Posterior vena cava (tissue), 2 donors: ENCODE measurements at regions of chr9 and their contacts with region 1.

Region 1: GRCh38 chr9:136451221-136451877 is 11.7 kb upstream of the INPP5E start:
- DNase-seq: no peak

Region 2: DNA sequence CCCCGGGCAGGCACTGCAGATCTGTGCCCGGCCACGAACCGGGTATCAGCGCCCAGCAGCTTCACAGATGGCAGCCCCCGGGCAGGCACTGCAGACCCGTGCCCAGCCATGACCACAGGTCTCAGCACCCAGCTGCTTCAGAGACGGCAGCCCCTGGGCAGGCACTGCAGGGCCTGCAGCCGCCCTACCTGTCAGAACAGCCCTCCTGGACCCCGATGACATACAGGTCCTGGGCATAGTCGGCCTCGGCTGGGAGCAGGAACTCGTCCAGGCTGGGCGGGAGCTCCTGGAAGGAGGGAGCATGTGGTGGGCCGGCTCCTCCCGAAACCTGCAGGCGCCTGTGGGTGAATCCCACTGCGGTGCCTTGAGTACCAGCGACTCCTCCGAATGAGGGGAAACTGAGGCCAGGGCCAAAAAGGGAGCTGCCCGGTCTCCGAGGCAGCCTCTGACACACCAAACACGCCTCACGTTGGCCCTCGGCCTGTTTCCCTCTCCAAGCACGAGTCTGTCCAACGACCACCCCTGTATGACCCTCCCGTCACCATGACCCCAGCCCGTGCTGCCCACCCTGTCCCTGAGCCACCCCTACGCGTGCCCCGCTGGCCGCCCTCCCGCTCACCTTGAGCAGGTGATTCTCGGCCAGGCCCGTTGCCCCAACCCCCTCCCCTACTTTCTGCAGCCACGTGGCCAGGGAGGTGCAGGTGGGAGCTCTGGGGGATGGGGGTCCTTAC is 17.3 kb before region 1 on chr9:
- intact Hi-C with region 1: loop called in 1 of 2 experiments (anchors 1 kb)
- DNase-seq: no peak

Region 3: DNA sequence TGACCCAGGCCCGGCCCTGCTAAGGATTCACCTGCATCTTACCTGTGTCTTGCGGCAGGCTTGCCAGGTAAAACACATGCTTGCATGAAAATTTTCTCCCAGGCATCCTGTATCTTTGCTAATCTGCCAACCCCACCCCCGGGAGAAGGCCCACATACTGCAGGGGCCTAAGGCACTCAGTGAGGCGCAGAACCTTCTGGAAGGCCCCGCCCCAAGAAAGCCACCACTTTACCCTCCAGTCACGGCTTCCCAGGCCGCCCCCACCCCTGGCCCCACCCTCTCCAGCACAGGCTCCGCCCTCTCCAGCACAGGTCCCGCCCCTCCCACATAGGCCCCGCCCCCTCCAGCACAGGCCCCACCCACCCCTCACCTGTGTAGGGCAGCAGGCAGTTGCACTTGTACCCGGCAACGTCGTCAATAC is 61.3 kb after region 1 on chr9:
- intact Hi-C with region 1: no loop called
- DNase-seq: no peak

Region 4: DNA sequence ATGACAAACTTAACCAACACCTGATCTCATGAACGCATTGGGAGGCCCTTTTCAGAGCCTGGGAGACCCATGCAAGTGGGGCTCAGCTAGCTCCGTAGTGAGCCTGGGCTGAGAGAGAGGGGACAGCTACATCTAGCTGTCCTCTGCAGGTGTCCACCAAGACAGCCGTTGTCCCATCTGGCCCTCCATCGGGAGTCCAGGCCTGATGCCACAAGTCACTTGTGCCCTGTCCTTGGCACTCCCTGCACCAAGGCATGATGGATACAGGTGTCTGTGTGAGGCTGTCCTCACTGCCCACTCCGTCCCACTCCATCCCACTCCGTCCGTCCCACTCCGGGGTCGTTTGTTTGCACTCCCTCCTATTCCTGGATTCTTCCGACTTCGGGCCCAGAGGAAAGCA is 417.3 kb after region 1 on chr9:
- intact Hi-C with region 1: no loop called
- DNase-seq: no peak